ENCODE measurements at regions of chr4 and their contacts with region 1.

Region 1: DNA sequence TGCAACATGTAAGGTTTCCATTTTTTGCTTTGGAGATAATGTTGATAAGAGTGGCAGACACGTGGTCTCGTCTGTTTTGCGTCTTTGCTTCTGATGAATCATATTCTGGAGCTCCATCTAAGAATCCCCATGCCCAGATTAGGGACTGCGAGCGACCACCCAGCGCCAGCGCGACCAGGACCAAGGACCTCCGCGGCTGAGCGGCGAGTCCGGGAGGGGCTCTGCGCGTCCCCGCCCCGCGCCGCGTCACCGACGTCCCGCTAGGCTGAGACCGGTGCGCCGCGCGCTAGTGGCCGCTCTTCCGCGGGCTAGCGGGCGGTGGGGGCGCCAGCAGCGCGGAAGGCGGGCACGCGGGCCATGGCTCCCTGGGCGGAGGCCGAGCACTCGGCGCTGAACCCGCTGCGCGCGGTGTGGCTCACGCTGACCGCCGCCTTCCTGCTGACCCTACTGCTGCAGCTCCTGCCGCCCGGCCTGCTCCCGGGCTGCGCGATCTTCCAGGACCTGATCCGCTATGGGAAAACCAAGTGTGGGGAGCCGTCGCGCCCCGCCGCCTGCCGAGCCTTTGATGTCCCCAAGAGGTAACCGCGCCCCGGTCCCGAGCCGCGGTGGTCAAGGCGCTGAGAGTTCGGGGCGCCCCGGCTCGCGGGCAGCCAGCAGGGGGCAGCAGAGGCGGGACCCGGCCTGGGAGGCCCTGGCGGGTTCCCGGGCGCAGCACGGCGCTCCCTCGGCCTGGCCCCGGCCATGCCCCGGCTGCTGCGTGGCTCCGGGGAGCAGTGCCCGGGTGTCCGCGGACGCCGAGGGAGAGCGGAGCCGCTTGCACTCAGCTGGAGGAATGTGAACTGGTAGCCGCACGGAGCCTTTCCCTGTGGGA is at the start of gene SRD5A3:
- DNase-seq: peak; percentile 84
- ATAC-seq: peak; percentile 89
- H3K4me3 Mint-ChIP-seq: peak within 1 kb of the TSS; percentile 79
- H3K27ac Mint-ChIP-seq: 0 out of 2 replicates have a peak within 1 kb of the TSS, but pooled peaks have one; percentile 53
- H3K4me1 Mint-ChIP-seq: peaks cover 27% of the 10 kb centered on the region
- H3K27me3 Mint-ChIP-seq: no peaks in the 10 kb centered on the region
- CTCF ChIP-seq: peak; percentile 80
- total RNA-seq, gene SRD5A3: 24.0 to 27.2 TPM (median 26.5 TPM) in 3 replicates

Region 2: GRCh38 chr4:54961357-54961975 is 384.7 kb before region 1 on chr4:
- CTCF ChIA-PET with region 1: no interaction called
- POLR2A ChIA-PET with region 1: no interaction called
- DNase-seq: no peak
- ATAC-seq: peak; percentile 77
- H3K4me3 Mint-ChIP-seq: no peak overlapping the region
- H3K27ac Mint-ChIP-seq: no peak overlapping the region
- H3K4me1 Mint-ChIP-seq: no peaks in the 10 kb centered on the region
- H3K27me3 Mint-ChIP-seq: no peaks in the 10 kb centered on the region
- CTCF ChIP-seq: peak; percentile 20; the same call in 1 of the 2 replicates

Region 3: DNA sequence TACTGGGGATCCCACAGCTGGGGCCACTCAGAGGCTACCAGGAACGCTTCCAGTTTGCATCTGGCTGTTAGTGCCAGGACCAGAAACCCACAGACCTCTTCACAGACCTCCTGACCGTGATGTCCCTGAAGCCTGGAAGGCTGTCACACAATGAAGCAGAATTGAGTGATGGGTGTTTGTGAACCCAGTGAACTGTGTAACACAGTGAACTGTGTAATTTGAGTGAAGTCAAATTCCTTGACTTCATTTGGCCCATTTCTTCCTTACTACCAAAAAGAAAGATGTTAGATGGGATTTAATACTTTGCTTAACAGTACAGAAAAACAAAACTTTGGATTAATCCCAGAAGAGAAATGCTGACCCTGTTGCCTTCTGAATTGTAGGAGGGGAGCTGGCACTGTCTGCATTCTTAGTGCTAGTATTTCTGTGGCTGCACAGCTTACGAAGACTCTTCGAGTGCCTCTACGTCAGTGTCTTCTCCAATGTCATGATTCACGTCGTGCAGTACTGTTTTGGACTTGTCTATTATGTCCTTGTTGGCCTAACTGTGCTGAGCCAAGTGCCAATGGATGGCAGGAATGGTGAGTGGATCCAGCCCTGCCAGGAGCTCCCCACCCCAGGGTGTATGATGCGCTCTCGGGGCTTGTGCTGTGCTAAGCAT is 17.6 kb after region 1 on chr4:
- CTCF ChIA-PET with region 1: interaction called, 15 read pairs
- POLR2A ChIA-PET with region 1: no interaction called
- DNase-seq: no peak
- ATAC-seq: no peak
- H3K4me3 Mint-ChIP-seq: no peak overlapping the region
- H3K27ac Mint-ChIP-seq: peak overlapping the region; percentile 50
- H3K4me1 Mint-ChIP-seq: peaks cover 38% of the 10 kb centered on the region
- H3K27me3 Mint-ChIP-seq: no peaks in the 10 kb centered on the region
- CTCF ChIP-seq: no peak

Region 4: DNA sequence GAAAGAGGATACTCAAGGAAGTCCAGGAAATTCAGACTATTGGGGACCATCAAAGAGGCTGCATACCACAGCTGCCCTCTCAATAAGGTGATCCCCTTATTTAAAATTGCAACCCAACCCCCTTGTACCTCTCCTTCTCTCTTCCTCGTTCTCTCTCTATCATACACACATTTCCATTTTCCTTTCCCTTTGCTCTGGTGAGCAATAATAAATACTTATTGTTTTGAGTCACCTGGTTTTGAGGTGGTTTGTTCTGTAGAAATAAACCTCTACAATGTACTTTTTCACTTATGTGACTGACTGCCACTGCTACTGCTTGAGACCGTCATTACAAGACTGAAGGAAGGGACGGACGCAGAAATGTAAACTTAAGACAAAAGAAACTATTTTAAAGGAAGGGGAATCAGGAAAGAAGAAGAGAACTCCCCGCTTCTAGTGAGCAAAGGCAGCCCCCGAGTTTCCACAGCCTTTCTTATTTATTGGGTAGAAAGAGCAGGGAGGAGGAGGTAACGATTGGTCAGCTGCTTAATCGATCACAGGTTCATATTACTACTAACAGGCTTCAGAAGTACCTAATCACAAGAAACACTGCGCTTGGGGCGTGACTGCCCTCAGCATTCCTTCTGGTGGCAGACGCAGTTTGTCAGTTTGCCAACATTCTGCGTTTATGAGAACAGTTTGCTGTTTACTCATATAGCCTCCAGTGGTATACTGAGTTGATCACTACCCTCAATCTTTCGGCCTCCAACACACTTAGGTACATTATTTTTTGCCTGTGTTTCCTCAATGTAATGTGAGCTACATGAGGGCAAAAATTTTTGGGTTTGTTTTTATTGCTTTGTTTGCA is 32.6 kb after region 1 on chr4:
- CTCF ChIA-PET with region 1: no interaction called
- POLR2A ChIA-PET with region 1: no interaction called
- DNase-seq: no peak
- ATAC-seq: no peak
- H3K4me3 Mint-ChIP-seq: no peak overlapping the region
- H3K27ac Mint-ChIP-seq: no peak overlapping the region
- H3K4me1 Mint-ChIP-seq: no peaks in the 10 kb centered on the region; the same call in 1 of the 2 replicates
- H3K27me3 Mint-ChIP-seq: no peaks in the 10 kb centered on the region
- CTCF ChIP-seq: no peak